ENCODE measurements at regions of chr14 and their contacts with region 1.

Region 1: GRCh38 chr14:101554991-101555668 is 6.2 kb upstream of the DIO3 start:
- DNase-seq: no peak
- ATAC-seq: no peak
- H3K4me3 ChIP-seq: no peak overlapping the region
- H3K27ac ChIP-seq: no peak overlapping the region
- H3K4me1 ChIP-seq: peaks cover 13% of the 10 kb centered on the region
- H3K27me3 ChIP-seq: no peaks in the 10 kb centered on the region
- CTCF ChIP-seq: no peak

Region 2: GRCh38 chr14:101480747-101481530 is 74.2 kb before region 1 on chr14:
- CTCF ChIA-PET with region 1: interaction called, 3 read pairs
- POLR2A ChIA-PET with region 1: no interaction called
- intact Hi-C with region 1: loop called (anchors 5 kb)
- DNase-seq: peak; percentile 95
- ATAC-seq: peak; percentile 51
- H3K4me3 ChIP-seq: peak overlapping the region; percentile 57
- H3K27ac ChIP-seq: peak overlapping the region; percentile 94
- H3K4me1 ChIP-seq: peaks cover 56% of the 10 kb centered on the region
- H3K27me3 ChIP-seq: no peaks in the 10 kb centered on the region
- CTCF ChIP-seq: no peak